Heart left ventricle (tissue), 16 donors: ENCODE measurements at regions of chr11 and their contacts with region 1.

Region 1: GRCh38 chr11:121112498-121113455 is 11.7 kb downstream of the TECTA start:
- DNase-seq: peak; percentile 50 to 76 (median 62)
- ATAC-seq: peak; percentile 77 to 95 (median 90)
- H3K4me3 ChIP-seq: no peak overlapping the region
- H3K27ac ChIP-seq: no peak overlapping the region
- H3K4me1 ChIP-seq: peaks cover 0 to 11% (median 2%) of the 10 kb centered on the region in 12 donors
- H3K27me3 ChIP-seq: no peaks in the 10 kb centered on the region
- CTCF ChIP-seq: peak; percentile 43 to 75 (median 61)
- POLR2A ChIP-seq: no peak

Region 2: DNA sequence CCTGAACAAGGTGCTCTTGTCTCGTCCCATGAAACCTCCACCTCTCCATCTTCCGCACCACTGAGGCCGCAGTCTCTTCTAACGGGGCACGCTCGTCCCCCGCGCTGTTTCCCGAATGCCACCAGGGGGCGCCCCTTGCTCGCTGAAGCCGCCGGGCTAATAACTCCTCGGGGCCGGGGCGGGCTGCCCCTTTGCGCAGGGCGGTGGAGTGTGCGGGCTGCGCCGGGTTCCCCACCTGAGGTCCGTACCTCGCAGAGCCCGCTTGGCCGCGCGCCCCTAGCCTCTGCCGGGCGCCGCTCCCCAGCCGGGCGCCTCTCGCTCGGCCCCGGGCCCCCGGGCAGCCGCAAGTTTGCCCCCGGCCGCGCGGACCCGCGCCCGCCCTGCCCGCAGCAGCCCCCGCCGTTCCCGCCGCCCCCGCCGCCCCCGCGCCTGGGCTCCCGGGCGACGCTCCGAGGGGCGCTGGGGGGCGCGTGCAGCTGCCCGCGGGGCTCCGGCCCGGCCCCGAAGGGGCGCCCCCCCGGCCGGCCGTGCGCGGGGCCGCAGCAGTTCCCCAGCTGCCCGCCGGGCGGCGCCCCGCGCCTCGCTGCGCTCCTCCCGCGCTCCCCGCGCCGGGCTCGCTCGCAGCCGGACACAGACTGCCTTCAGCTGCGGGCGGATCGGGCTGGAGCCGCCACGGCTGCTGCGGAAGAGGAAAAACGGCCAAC is 601.5 kb before region 1 on chr11 and contains the start of gene GRIK4:
- intact Hi-C with region 1: loop called (anchors 1 to 10 kb)
- DNase-seq: peak; percentile 77 to 91 (median 83)
- ATAC-seq: peak; percentile 53 to 94 (median 90)
- H3K4me3 ChIP-seq: peak within 1 kb of the TSS in 11 of 12 donors; percentile 18 to 62 (median 51)
- H3K27ac ChIP-seq: no peak within 1 kb of the TSS
- H3K4me1 ChIP-seq: peaks cover 0 to 7% (median 0%) of the 10 kb centered on the region in 12 donors
- H3K27me3 ChIP-seq: peaks cover 3 to 54% (median 12%) of the 10 kb centered on the region in 9 donors
- CTCF ChIP-seq: peak; percentile 88 to 95 (median 93)
- POLR2A ChIP-seq: no peak
- total RNA-seq, gene GRIK4: 0.07 to 0.45 (median 0.13) TPM in 4 of 9 donors, not detected in the others

Region 3: DNA sequence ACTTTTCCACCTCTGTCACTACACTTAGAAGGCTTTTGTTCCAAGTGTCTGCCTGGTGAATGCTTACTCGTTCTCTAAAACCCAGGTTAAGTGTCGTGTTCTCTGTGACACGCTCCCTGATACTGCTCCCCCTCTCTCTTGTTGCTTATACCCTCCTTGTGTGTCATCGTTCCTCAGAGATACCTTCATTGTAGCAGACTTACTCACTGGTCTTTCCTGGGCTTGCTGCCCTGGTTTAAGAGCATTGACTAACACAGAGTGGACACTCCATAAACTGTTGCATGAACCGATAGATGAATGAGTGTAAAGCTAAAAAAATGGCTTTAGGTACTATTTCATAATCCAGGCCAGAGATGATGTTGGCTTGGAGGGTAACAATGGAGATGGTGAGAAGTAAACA is 429.9 kb before region 1 on chr11:
- intact Hi-C with region 1: loop called in 1 of 10 experiments (anchors 10 kb)
- DNase-seq: no peak
- ATAC-seq: no peak
- H3K4me3 ChIP-seq: no peak overlapping the region
- H3K27ac ChIP-seq: no peak overlapping the region
- H3K4me1 ChIP-seq: no peaks in the 10 kb centered on the region
- H3K27me3 ChIP-seq: peaks cover 0 to 58% (median 8%) of the 10 kb centered on the region in 9 donors
- CTCF ChIP-seq: no peak
- POLR2A ChIP-seq: no peak

Region 4: DNA sequence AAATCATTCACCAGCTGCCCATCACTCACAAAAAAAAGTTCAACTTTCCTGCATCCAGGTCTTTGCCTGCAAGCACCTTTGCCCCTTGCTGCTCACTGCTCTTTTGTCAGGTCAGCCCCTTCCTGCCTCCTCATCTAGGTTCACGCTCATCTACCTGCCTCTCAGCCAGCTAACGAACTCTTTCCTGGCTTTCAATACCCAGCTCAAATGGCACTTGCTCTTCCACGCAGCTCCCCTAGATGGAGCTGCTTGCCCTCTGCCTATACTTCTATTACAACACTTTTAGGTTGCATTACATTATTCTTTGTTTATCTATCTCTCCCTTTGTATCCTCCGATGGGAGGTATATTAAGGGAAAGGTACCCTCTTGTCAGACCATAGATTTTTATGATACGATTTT is 167.7 kb before region 1 on chr11:
- intact Hi-C with region 1: loop called in 4 of 10 experiments (anchors 10 kb)
- DNase-seq: no peak
- ATAC-seq: no peak
- H3K4me3 ChIP-seq: no peak overlapping the region
- H3K27ac ChIP-seq: no peak overlapping the region
- H3K4me1 ChIP-seq: no peaks in the 10 kb centered on the region
- H3K27me3 ChIP-seq: peaks cover 0 to 45% (median 5%) of the 10 kb centered on the region in 9 donors
- CTCF ChIP-seq: peak in 2 of 12 donors; percentile 11 to 15
- POLR2A ChIP-seq: no peak